Common myeloid progenitor, CD34-positive (primary cell): ENCODE measurements at regions of chr2 and their contacts with region 1.

Region 1: GRCh38 chr2:138827426-138828054 is 47.4 kb upstream of the NXPH2 start:
- DNase-seq: peak; percentile 80 to 90 (median 83)
- H3K4me3 ChIP-seq: no peak overlapping the region
- H3K27ac ChIP-seq: no peak overlapping the region
- H3K4me1 ChIP-seq: peaks cover 6 to 14% (median 7%) of the 10 kb centered on the region in 4 experiments
- H3K27me3 ChIP-seq: no peaks in the 10 kb centered on the region

Region 2: GRCh38 chr2:137910641-137911040 is 916.9 kb before region 1 on chr2:
- CTCF ChIA-PET with region 1: interaction called, 36 read pairs
- POLR2A ChIA-PET with region 1: no interaction called
- DNase-seq: peak; percentile 20 to 44 (median 41)
- H3K4me3 ChIP-seq: no peak overlapping the region
- H3K27ac ChIP-seq: no peak overlapping the region
- H3K4me1 ChIP-seq: no peaks in the 10 kb centered on the region
- H3K27me3 ChIP-seq: no peaks in the 10 kb centered on the region

Region 3: DNA sequence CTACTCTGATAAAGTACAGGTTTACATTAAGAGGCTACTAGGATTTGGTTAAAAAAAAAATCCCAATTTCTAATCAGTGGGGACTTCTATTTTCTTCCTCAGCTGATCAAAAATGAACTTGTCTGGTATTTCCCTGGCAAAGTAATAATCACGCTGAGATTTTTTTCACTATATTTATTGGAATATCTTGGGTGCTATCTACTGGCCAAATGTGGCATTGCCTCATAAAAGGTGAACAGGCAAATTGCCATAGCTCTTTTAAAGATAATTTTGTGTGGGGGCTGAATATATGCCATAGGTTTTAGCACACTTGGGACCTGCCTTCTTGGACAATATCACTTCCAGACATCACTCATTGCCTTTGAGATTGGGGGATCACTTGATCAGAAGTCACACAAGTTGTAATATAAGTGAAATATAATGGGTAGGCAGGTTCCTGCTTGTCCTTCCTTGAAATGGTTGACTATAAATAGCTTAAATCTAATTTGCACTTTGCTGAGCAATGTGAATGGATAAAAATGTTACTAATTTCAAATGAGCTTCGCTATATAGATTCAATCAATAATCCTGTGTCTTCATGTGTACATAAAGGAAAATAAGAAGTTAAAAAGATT is 40.4 kb before region 1 on chr2:
- CTCF ChIA-PET with region 1: interaction called, 28 read pairs
- POLR2A ChIA-PET with region 1: no interaction called
- DNase-seq: peak; percentile 26 to 69 (median 60)
- H3K4me3 ChIP-seq: no peak overlapping the region
- H3K27ac ChIP-seq: no peak overlapping the region
- H3K4me1 ChIP-seq: no peaks in the 10 kb centered on the region
- H3K27me3 ChIP-seq: peaks cover 0 to 19% (median 2%) of the 10 kb centered on the region in 5 experiments

Region 4: DNA sequence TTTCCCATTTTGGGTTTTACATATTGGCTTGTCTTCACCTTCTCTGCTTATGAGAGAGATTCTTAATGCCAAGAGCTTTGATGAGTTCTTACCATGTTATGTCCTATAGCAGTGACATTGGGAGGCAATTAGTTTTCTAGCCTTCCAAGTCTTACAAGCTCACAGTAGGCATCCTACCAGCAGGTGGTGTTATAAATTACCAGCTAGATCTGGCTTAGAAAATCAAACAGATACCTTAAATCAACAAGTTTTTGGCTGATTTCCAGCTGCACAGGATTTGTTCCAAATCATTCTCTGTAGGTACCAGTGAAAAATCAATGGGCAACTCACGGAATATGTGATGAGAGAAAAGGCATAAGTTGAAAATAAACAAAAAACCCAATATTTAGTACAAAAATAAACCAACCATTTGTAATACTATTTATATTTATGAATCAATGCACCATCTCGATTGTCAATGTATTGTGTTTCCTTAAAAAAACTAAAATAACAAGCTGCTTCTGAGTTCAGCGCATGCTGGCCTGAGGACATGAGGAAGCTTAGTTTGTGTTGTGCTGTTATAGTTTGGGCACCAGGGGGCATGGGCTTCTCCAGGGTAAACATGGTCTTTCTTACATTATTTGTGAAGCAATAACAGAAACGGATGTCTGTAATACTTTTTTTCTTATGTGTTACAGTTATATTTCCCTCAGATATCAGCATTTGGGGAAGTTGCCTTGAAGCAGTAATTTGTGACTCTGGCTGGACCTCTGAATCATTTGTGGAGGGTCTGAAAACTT is 13.2 kb before region 1 on chr2:
- CTCF ChIA-PET with region 1: interaction called, 101 read pairs
- POLR2A ChIA-PET with region 1: no interaction called
- DNase-seq: peak; percentile 88 to 96 (median 95)
- H3K4me3 ChIP-seq: peak overlapping the region in 1 of 7 experiments; percentile 45
- H3K27ac ChIP-seq: peak overlapping the region in 1 of 2 experiments; percentile 16
- H3K4me1 ChIP-seq: peaks cover 4 to 15% (median 8%) of the 10 kb centered on the region in 4 experiments
- H3K27me3 ChIP-seq: no peaks in the 10 kb centered on the region

Region 5: GRCh38 chr2:138841459-138841858 is 13.9 kb after region 1 on chr2:
- CTCF ChIA-PET with region 1: interaction called, 13 read pairs
- POLR2A ChIA-PET with region 1: no interaction called
- DNase-seq: no peak
- H3K4me3 ChIP-seq: no peak overlapping the region
- H3K27ac ChIP-seq: no peak overlapping the region
- H3K4me1 ChIP-seq: peaks cover 6 to 20% (median 7%) of the 10 kb centered on the region in 4 experiments
- H3K27me3 ChIP-seq: no peaks in the 10 kb centered on the region